ENCODE measurements at regions of chr12 and their contacts with region 1.

Region 1: GRCh38 chr12:53746592-53747092 is 5.1 kb downstream of the CISTR start:
- DNase-seq: peak; percentile 93
- ATAC-seq: peak; percentile 83 to 94 (median 92)
- H3K4me3 ChIP-seq: no peak overlapping the region
- H3K27ac ChIP-seq: no peak overlapping the region
- H3K4me1 ChIP-seq: peaks cover 0 to 29% (median 9%) of the 10 kb centered on the region in 9 donors
- H3K27me3 ChIP-seq: peaks cover 4 to 87% (median 65%) of the 10 kb centered on the region in 7 donors
- CTCF ChIP-seq: peak; percentile 100

Region 2: DNA sequence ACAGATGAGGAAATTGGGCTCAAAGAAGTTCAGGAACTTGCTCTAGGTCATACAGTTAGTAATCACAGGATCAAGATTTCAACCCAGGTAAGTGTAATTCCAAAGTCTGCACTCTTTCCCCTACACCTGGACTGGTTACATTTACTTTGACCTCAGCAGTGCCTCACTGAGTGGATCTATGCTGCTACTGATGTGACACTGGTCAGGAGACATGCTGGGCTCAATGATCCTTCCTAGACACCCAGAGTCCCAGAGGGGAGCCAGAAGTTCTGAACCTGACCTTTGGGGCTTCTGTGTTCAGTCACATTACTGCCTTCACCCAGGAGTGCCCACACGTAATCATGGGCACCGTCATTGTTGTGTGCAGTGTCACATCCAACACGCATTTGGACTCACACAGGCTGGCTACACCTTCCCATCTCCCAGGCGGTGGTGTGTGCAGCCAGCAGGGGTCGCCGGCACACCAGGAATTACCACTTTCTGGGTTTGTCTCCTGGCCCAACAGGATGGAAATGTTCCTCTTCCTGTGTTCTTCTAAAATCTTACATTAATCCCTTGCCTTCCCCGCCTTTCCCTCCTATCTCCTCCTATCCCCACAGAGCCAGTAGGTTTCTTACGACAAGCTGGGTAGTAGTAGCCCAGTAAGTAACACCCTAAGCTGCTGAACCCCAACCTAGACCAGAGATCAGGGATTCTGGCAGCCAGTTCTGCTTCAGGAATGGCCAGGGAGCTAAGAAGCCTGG is 45.0 kb before region 1 on chr12:
- intact Hi-C with region 1: loop called (anchors 1 to 2 kb)
- DNase-seq: peak; percentile 80 to 85
- ATAC-seq: peak; percentile 86 to 96 (median 95)
- H3K4me3 ChIP-seq: no peak overlapping the region
- H3K27ac ChIP-seq: no peak overlapping the region
- H3K4me1 ChIP-seq: peaks cover 0 to 10% (median 3%) of the 10 kb centered on the region in 9 donors
- H3K27me3 ChIP-seq: peaks cover 6 to 91% (median 68%) of the 10 kb centered on the region in 7 donors
- CTCF ChIP-seq: peak; percentile 69 to 97 (median 91)

Measured in heart right ventricle (tissue), 16 donors.